CD14-positive monocyte (primary cell): ENCODE measurements at regions of chr14 and their contacts with region 1.

Region 1: GRCh38 chr14:21455911-21456667 is at the start of gene CHD8:
- DNase-seq: peak; percentile 99 to 100 (median 99)
- H3K4me3 ChIP-seq: peak within 1 kb of the TSS; percentile 75 to 99 (median 95)
- H3K4me3 Mint-ChIP-seq: peak within 1 kb of the TSS; percentile 93 to 98
- H3K27ac ChIP-seq: peak within 1 kb of the TSS; percentile 93 to 98
- H3K27ac Mint-ChIP-seq: peak within 1 kb of the TSS; percentile 97 to 99 (median 98)
- H3K4me1 ChIP-seq: peaks cover 15 to 24% of the 10 kb centered on the region in 2 donors
- H3K4me1 Mint-ChIP-seq: peaks cover 25% of the 10 kb centered on the region
- H3K27me3 ChIP-seq: no peaks in the 10 kb centered on the region
- H3K27me3 Mint-ChIP-seq: peaks cover 0 to 1% (median 0%) of the 10 kb centered on the region in 3 donors
- CTCF ChIP-seq: peak; percentile 66
- polyA plus RNA-seq, gene CHD8: 8.2 to 34.2 (median 15.1) TPM

Region 2: DNA sequence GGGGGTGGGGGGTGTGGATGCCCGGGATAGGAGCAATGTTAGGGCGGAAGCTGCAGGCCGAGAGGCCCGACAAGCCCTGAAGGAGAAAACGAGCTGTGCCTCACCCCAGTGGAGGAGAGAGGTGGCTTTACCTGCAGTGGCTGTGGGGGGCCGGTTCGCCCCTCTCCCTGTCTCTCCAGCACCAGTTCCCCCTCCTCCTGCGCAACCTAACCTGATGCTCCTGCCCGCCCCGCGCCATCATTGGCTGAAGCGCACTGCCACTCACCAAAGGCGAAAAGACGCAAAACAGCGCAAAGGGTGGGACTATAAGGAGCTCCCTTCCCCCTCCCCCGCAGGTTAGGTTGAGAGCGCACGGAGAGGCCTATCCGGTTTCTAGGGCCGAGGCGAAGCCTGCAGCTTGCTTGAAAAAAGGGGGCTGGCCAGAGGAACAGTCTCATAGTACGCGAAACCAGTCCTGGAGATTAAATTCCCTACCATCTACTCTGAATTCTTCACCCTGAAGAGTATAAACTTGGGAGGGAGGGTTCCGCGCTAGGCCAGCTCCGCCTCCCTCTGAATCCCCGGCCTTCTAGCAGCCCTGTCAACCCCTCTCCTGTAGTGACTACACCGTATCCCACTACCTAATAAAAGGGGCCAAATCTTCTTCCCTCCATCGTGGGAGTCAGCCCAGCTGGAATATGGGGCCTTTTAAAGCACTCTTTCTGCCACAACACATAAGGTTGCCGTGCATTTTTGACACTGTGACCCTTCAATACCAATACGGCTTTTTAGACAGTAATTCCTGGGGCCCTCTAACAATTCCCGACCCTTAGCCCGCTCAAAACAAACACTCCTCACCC is 18.8 kb before region 1 on chr14:
- intact Hi-C with region 1: loop called (anchors 1 to 2 kb)
- DNase-seq: peak; percentile 97 to 98 (median 97)
- H3K4me3 ChIP-seq: peak overlapping the region; percentile 79 to 94 (median 93)
- H3K4me3 Mint-ChIP-seq: peak overlapping the region; percentile 85 to 86
- H3K27ac ChIP-seq: peak overlapping the region; percentile 87 to 96
- H3K27ac Mint-ChIP-seq: peak overlapping the region; percentile 82 to 97 (median 91)
- H3K4me1 ChIP-seq: peaks cover 17 to 29% of the 10 kb centered on the region in 2 donors
- H3K4me1 Mint-ChIP-seq: peaks cover 35% of the 10 kb centered on the region
- H3K27me3 ChIP-seq: no peaks in the 10 kb centered on the region
- H3K27me3 Mint-ChIP-seq: no peaks in the 10 kb centered on the region
- CTCF ChIP-seq: no peak

Region 3: GRCh38 chr14:21476925-21477681 is 21.0 kb after region 1 on chr14 and contains the starts of genes RAB2B and TOX4:
- intact Hi-C with region 1: loop called (anchors 1 kb)
- DNase-seq: peak; percentile 97
- H3K4me3 ChIP-seq: peak within 1 kb of the TSS; percentile 58 to 100 (median 97)
- H3K4me3 Mint-ChIP-seq: peak within 1 kb of the TSS; percentile 100
- H3K27ac ChIP-seq: peak within 1 kb of the TSS; percentile 84 to 95
- H3K27ac Mint-ChIP-seq: peak within 1 kb of the TSS; percentile 99 to 100 (median 100)
- H3K4me1 ChIP-seq: peaks cover 12 to 26% of the 10 kb centered on the region in 2 donors
- H3K4me1 Mint-ChIP-seq: peaks cover 18% of the 10 kb centered on the region
- H3K27me3 ChIP-seq: no peaks in the 10 kb centered on the region
- H3K27me3 Mint-ChIP-seq: peaks cover 0 to 1% (median 0%) of the 10 kb centered on the region in 3 donors
- CTCF ChIP-seq: peak; percentile 97
- polyA plus RNA-seq, gene RAB2B: 2.1 to 9.9 (median 5.1) TPM
- polyA plus RNA-seq, gene TOX4: 28.3 to 73.1 (median 68.5) TPM

Region 4: GRCh38 chr14:21768116-21768874 is 312.2 kb after region 1 on chr14:
- intact Hi-C with region 1: no loop called
- DNase-seq: no peak
- H3K4me3 ChIP-seq: no peak overlapping the region
- H3K4me3 Mint-ChIP-seq: no peak overlapping the region
- H3K27ac ChIP-seq: no peak overlapping the region
- H3K27ac Mint-ChIP-seq: no peak overlapping the region
- H3K4me1 ChIP-seq: no peaks in the 10 kb centered on the region
- H3K4me1 Mint-ChIP-seq: no peaks in the 10 kb centered on the region
- H3K27me3 ChIP-seq: no peaks in the 10 kb centered on the region
- H3K27me3 Mint-ChIP-seq: peaks cover 0 to 4% (median 0%) of the 10 kb centered on the region in 3 donors
- CTCF ChIP-seq: peak; percentile 51